ENCODE measurements at regions of chr11 and their contacts with region 1.

Region 1: GRCh38 chr11:74449369-74449931 is 17.9 kb downstream of the KCNE3 start:
- DNase-seq: peak in 12 of 14 experiments; percentile 2 to 82 (median 26)
- ATAC-seq: peak; percentile 95
- H3K4me3 ChIP-seq: no peak overlapping the region
- H3K4me3 Mint-ChIP-seq: no peak overlapping the region
- H3K27ac ChIP-seq: no peak overlapping the region
- H3K27ac Mint-ChIP-seq: no peak overlapping the region
- H3K4me1 ChIP-seq: no peaks in the 10 kb centered on the region
- H3K4me1 Mint-ChIP-seq: no peaks in the 10 kb centered on the region
- H3K27me3 ChIP-seq: no peaks in the 10 kb centered on the region
- H3K27me3 Mint-ChIP-seq: peaks cover 13% of the 10 kb centered on the region
- CTCF ChIP-seq: peak; percentile 76

Region 2: DNA sequence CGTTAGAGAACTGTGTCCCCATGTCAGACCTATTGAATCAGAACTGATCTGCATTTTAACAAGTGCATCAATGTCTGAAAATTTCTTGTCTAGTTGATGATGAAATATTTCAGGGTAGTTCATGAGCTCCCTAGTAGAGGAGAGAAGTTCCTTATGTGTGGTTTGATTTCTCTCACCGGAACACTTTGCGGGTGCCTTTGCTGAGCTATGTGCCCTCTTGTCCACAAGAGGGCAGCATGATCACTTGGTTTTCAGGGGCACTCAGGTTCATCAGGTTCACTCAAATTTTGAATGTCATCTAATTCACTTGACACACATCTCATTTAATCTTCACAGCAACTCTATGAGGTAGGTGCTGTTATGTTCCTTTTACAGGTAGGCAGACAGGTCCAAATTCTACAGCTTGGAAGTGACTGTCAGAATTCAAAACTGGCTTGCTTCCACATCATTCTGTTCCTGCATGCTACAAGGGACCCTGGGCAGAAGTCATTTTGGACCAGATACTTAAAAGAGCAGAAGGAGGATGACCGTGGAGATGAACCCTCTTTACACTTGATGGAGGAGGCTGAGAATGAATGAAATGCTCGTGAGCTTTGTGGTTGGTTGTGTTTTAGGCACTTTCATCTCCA is 193.6 kb before region 1 on chr11:
- CTCF ChIA-PET with region 1: interaction called, 14 read pairs
- POLR2A ChIA-PET with region 1: interaction called, 3 read pairs
- intact Hi-C with region 1: loop called (anchors 1 kb)
- DNase-seq: peak; percentile 20 to 80 (median 43)
- ATAC-seq: peak; percentile 89
- H3K4me3 ChIP-seq: no peak overlapping the region
- H3K4me3 Mint-ChIP-seq: no peak overlapping the region
- H3K27ac ChIP-seq: no peak overlapping the region
- H3K27ac Mint-ChIP-seq: no peak overlapping the region
- H3K4me1 ChIP-seq: no peaks in the 10 kb centered on the region
- H3K4me1 Mint-ChIP-seq: peaks cover 7% of the 10 kb centered on the region
- H3K27me3 ChIP-seq: no peaks in the 10 kb centered on the region
- H3K27me3 Mint-ChIP-seq: no peaks in the 10 kb centered on the region
- CTCF ChIP-seq: peak; percentile 96

Region 3: GRCh38 chr11:74268439-74268838 is 181.0 kb before region 1 on chr11:
- CTCF ChIA-PET with region 1: no interaction called
- POLR2A ChIA-PET with region 1: no interaction called
- intact Hi-C with region 1: no loop called
- DNase-seq: no peak
- ATAC-seq: no peak
- H3K4me3 ChIP-seq: no peak overlapping the region
- H3K4me3 Mint-ChIP-seq: no peak overlapping the region
- H3K27ac ChIP-seq: no peak overlapping the region
- H3K27ac Mint-ChIP-seq: no peak overlapping the region
- H3K4me1 ChIP-seq: peaks cover 6% of the 10 kb centered on the region
- H3K4me1 Mint-ChIP-seq: peaks cover 26% of the 10 kb centered on the region
- H3K27me3 ChIP-seq: no peaks in the 10 kb centered on the region
- H3K27me3 Mint-ChIP-seq: peaks cover 8% of the 10 kb centered on the region
- CTCF ChIP-seq: no peak

Region 4: DNA sequence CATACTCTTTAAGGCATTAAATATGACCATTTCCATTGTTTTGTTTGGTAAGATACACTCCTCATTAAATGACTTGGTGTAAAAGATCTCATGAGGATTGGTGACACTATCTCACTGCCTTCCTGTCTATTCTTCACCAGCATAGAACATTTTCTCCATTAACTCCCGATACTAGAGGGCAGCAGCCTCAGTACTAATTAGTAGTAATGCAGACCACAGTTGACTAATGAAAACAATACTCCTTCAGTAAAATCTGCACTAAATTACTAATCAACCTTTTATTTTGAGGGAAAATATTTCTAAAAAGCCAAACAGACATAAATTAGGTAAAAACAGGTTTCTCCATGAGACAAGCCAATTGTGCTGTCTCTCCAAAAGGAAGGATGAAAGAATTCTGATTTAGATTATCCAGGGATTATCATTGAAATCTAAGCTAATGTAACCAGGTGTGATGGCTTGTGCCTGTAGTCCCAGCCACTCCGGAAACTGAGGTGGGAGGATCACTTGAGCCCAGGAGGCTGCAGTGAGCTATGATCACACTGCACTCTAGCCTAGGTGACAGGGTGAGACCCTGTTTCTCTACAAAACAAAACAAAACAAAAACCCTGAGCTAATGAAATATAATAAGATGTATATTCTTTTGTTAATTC is 60.6 kb before region 1 on chr11:
- CTCF ChIA-PET with region 1: interaction called, 50 read pairs
- POLR2A ChIA-PET with region 1: interaction called, 20 read pairs
- intact Hi-C with region 1: loop called (anchors 1 kb)
- DNase-seq: peak; percentile 14 to 84 (median 62)
- ATAC-seq: peak; percentile 91
- H3K4me3 ChIP-seq: no peak overlapping the region
- H3K4me3 Mint-ChIP-seq: peak overlapping the region; percentile 35
- H3K27ac ChIP-seq: no peak overlapping the region
- H3K27ac Mint-ChIP-seq: peak overlapping the region; percentile 40
- H3K4me1 ChIP-seq: peaks cover 4% of the 10 kb centered on the region
- H3K4me1 Mint-ChIP-seq: peaks cover 38% of the 10 kb centered on the region
- H3K27me3 ChIP-seq: no peaks in the 10 kb centered on the region
- H3K27me3 Mint-ChIP-seq: no peaks in the 10 kb centered on the region
- CTCF ChIP-seq: peak; percentile 88

Region 5: DNA sequence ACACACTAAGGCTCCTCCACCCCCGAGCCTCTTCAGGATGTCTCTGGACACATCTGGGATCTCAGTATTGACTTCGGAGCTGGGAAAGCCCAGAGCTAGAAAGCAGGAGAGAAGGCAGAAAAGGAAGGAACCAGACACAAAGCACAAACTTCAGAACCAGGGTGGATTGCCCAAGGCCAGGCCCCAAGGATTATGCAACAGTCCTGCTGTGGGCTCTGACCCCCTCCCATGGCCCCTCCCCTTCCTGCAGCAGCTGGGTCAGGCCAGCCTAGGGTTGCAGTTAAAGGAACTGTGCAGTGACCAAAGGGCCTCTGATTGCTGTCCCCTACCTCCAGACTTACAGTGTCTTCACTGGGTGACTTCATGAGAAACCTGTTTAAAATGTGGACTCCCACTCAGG is 12.6 kb after region 1 on chr11:
- CTCF ChIA-PET with region 1: interaction called, 12 read pairs
- POLR2A ChIA-PET with region 1: no interaction called
- intact Hi-C with region 1: no loop called
- DNase-seq: peak in 3 of 14 experiments; percentile 21 to 62 (median 53)
- ATAC-seq: no peak
- H3K4me3 ChIP-seq: peak overlapping the region; percentile 29
- H3K4me3 Mint-ChIP-seq: no peak overlapping the region
- H3K27ac ChIP-seq: no peak overlapping the region
- H3K27ac Mint-ChIP-seq: no peak overlapping the region
- H3K4me1 ChIP-seq: peaks cover 2% of the 10 kb centered on the region
- H3K4me1 Mint-ChIP-seq: no peaks in the 10 kb centered on the region
- H3K27me3 ChIP-seq: peaks cover 10 to 17% of the 10 kb centered on the region in 2 experiments
- H3K27me3 Mint-ChIP-seq: peaks cover 23% of the 10 kb centered on the region
- CTCF ChIP-seq: no peak

Region 6: GRCh38 chr11:74492974-74493790 is 43.7 kb after region 1 on chr11 and contains the start of gene LIPT2:
- CTCF ChIA-PET with region 1: interaction called, 16 read pairs
- POLR2A ChIA-PET with region 1: interaction called, 10 read pairs
- intact Hi-C with region 1: no loop called
- DNase-seq: peak; percentile 94 to 99 (median 98)
- ATAC-seq: peak; percentile 95
- H3K4me3 ChIP-seq: peak within 1 kb of the TSS; percentile 66
- H3K4me3 Mint-ChIP-seq: peak within 1 kb of the TSS; percentile 91
- H3K27ac ChIP-seq: peak within 1 kb of the TSS; percentile 61 to 94
- H3K27ac Mint-ChIP-seq: peak within 1 kb of the TSS; percentile 86
- H3K4me1 ChIP-seq: peaks cover 12% of the 10 kb centered on the region
- H3K4me1 Mint-ChIP-seq: peaks cover 41% of the 10 kb centered on the region
- H3K27me3 ChIP-seq: no peaks in the 10 kb centered on the region
- H3K27me3 Mint-ChIP-seq: no peaks in the 10 kb centered on the region
- CTCF ChIP-seq: no peak
- total RNA-seq, gene LIPT2: 10.7 to 10.9 TPM

Region 7: GRCh38 chr11:74570266-74571061 is 121.0 kb after region 1 on chr11:
- CTCF ChIA-PET with region 1: interaction called, 9 read pairs
- POLR2A ChIA-PET with region 1: no interaction called
- intact Hi-C with region 1: loop called in 1 of 2 experiments (anchors 1 kb)
- DNase-seq: peak in 5 of 14 experiments; percentile 10 to 57 (median 34)
- ATAC-seq: no peak
- H3K4me3 ChIP-seq: no peak overlapping the region
- H3K4me3 Mint-ChIP-seq: no peak overlapping the region
- H3K27ac ChIP-seq: no peak overlapping the region
- H3K27ac Mint-ChIP-seq: no peak overlapping the region
- H3K4me1 ChIP-seq: no peaks in the 10 kb centered on the region
- H3K4me1 Mint-ChIP-seq: no peaks in the 10 kb centered on the region
- H3K27me3 ChIP-seq: no peaks in the 10 kb centered on the region
- H3K27me3 Mint-ChIP-seq: peaks cover 8% of the 10 kb centered on the region
- CTCF ChIP-seq: peak; percentile 44

Region 8: GRCh38 chr11:74726547-74727182 is 277.2 kb after region 1 on chr11:
- CTCF ChIA-PET with region 1: no interaction called
- POLR2A ChIA-PET with region 1: no interaction called
- intact Hi-C with region 1: loop called in 1 of 2 experiments (anchors 5 kb)
- DNase-seq: peak; percentile 21 to 77 (median 48)
- ATAC-seq: peak; percentile 99
- H3K4me3 ChIP-seq: no peak overlapping the region
- H3K4me3 Mint-ChIP-seq: no peak overlapping the region
- H3K27ac ChIP-seq: no peak overlapping the region
- H3K27ac Mint-ChIP-seq: no peak overlapping the region
- H3K4me1 ChIP-seq: peaks cover 10% of the 10 kb centered on the region
- H3K4me1 Mint-ChIP-seq: no peaks in the 10 kb centered on the region
- H3K27me3 ChIP-seq: peaks cover 14 to 16% of the 10 kb centered on the region in 2 experiments
- H3K27me3 Mint-ChIP-seq: peaks cover 34% of the 10 kb centered on the region
- CTCF ChIP-seq: peak; percentile 83

Measured in CD4-positive, alpha-beta T cell (primary cell).